T-cell (primary cell): ENCODE measurements at regions of chr7 and their contacts with region 1.

Region 1: DNA sequence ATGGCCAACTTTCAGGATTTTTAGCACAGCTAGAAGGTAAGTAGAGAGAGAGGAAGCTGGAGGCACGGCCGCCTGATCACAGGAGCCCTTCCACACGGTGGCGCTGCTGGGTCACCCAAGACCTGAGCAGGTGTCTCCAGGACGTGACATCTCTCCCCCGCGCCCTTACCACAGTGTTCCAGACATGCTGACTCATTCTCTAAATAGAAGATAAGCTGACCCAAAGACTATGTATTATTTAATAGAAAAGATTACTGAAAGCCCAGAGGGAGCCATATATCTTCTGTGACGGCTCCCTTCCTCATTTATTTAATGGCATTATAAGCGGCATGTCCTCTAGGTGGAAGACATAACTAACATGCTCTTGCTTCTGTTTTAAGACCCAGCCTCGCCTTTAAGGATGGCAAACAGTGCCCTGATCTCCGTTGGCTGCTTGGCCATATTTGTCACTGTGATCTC is 26.0 kb upstream of the MALSU1 start:
- DNase-seq: peak; percentile 67 to 92 (median 84)
- ATAC-seq: peak; percentile 98 to 99 (median 98)
- H3K4me3 ChIP-seq: no peak overlapping the region
- H3K4me3 Mint-ChIP-seq: peak overlapping the region; percentile 46 to 50 (median 47)
- H3K27ac ChIP-seq: no peak overlapping the region
- H3K27ac Mint-ChIP-seq: no peak overlapping the region
- H3K4me1 ChIP-seq: peaks cover 0 to 7% of the 10 kb centered on the region in 2 experiments
- H3K4me1 Mint-ChIP-seq: peaks cover 7 to 15% (median 13%) of the 10 kb centered on the region in 3 donors
- H3K27me3 ChIP-seq: peaks cover 0 to 8% of the 10 kb centered on the region in 2 experiments
- H3K27me3 Mint-ChIP-seq: peaks cover 4 to 13% of the 10 kb centered on the region in 2 donors

Region 2: DNA sequence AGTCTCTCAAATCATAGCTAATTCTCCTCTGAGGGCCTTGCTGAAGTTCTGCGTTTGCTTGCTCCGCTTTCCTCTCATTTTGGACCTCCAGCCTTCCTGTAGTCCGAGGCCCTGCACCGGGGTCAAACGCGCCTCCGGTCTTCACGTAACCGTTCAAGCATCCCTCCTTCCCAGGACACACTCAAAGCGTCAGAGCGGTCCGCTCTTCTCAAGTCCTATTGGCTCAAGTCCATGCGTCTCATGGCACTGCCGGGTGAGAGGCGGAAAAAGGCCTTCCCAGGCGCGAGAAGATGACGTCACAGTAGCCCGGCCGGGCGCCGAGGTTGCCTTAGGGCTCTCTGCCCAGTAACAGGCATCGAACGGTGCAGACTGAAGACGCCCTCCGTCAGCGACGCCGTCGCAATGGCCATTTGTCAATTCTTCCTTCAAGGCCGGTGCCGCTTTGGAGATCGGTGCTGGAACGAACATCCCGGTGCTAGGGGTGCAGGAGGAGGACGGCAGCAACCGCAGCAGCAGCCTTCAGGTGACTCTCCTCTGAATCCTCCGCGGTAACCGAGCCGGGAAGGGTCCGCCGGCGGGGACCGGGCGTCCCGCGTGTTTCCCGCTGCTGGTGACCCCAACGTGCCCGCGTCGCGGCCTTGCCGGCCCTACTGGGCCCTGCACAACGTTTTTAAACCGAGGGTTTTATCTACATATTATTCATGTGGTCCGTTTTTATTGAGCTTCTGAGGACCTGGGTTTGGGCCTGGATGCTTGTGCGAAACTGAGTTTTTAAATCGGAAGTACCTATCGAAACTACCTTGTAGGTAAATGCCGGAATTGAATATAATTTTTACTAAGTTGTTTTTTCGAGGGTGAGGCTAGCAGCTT is 91.3 kb before region 1 on chr7 and contains the start of gene NUP42:
- CTCF ChIA-PET with region 1: interaction called in 1 of 2 experiments, 11 read pairs
- POLR2A ChIA-PET with region 1: no interaction called
- DNase-seq: peak; percentile 87 to 97 (median 92)
- ATAC-seq: peak; percentile 94 to 97 (median 96)
- H3K4me3 ChIP-seq: peak within 1 kb of the TSS; percentile 72 to 74
- H3K4me3 Mint-ChIP-seq: peak within 1 kb of the TSS; percentile 93 to 98 (median 95)
- H3K27ac ChIP-seq: peak within 1 kb of the TSS; percentile 83
- H3K27ac Mint-ChIP-seq: peak within 1 kb of the TSS; percentile 97
- H3K4me1 ChIP-seq: peaks cover 14 to 20% of the 10 kb centered on the region in 2 experiments
- H3K4me1 Mint-ChIP-seq: peaks cover 37 to 50% (median 40%) of the 10 kb centered on the region in 3 donors
- H3K27me3 ChIP-seq: no peaks in the 10 kb centered on the region
- H3K27me3 Mint-ChIP-seq: no peaks in the 10 kb centered on the region
- total RNA-seq, gene NUP42: 17.5 to 38.9 (median 31.9) TPM

Region 3: GRCh38 chr7:23216021-23216420 is 57.1 kb before region 1 on chr7:
- CTCF ChIA-PET with region 1: no interaction called
- POLR2A ChIA-PET with region 1: no interaction called
- DNase-seq: no peak
- ATAC-seq: no peak
- H3K4me3 ChIP-seq: no peak overlapping the region
- H3K4me3 Mint-ChIP-seq: no peak overlapping the region
- H3K27ac ChIP-seq: no peak overlapping the region
- H3K27ac Mint-ChIP-seq: no peak overlapping the region
- H3K4me1 ChIP-seq: no peaks in the 10 kb centered on the region
- H3K4me1 Mint-ChIP-seq: no peaks in the 10 kb centered on the region
- H3K27me3 ChIP-seq: peaks cover 0 to 17% of the 10 kb centered on the region in 2 experiments
- H3K27me3 Mint-ChIP-seq: peaks cover 12 to 15% of the 10 kb centered on the region in 2 donors

Region 4: DNA sequence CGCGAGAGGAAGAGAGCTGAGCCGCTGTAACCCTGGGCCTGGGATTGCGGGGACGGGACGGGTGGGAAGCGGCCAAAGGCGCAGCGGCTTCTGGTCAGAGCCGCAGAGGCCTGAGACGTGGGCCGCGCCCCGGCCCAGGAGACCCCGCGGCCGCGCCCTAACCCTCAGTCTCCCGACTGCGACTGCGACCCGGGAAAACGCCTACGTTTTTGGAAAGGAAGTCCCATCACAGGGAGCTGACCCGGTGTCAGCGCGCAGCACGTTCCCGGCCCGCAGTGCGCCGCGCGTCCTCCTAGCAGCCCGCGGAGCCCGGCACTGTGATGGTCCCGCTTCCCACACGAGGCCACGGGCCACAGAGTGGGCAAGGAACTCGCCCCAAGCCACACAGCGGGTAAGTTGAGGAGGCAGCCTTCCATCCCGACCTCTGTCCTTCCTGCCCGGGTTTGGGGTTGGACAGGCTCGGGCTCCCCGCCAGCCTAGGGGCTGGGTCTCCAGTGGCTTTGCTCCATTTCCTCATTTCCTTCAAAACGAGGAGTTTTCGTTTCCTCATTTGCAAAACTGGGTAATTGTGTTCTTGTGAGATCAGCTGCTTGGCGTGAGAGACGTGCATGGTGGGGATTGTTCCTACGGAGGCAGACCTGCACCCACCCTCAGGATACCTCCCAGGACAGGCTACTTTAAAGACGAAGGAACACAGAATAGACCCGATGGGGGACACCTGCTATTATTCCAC is 25.4 kb before region 1 on chr7:
- CTCF ChIA-PET with region 1: no interaction called
- POLR2A ChIA-PET with region 1: no interaction called
- DNase-seq: peak in 1 of 35 experiments; percentile 11
- ATAC-seq: no peak
- H3K4me3 ChIP-seq: peak overlapping the region in 1 of 2 donors; percentile 29
- H3K4me3 Mint-ChIP-seq: no peak overlapping the region
- H3K27ac ChIP-seq: no peak overlapping the region
- H3K27ac Mint-ChIP-seq: no peak overlapping the region
- H3K4me1 ChIP-seq: peaks cover 0 to 8% of the 10 kb centered on the region in 2 experiments
- H3K4me1 Mint-ChIP-seq: peaks cover 0 to 3% (median 2%) of the 10 kb centered on the region in 3 donors
- H3K27me3 ChIP-seq: peaks cover 7 to 35% of the 10 kb centered on the region in 2 experiments
- H3K27me3 Mint-ChIP-seq: peaks cover 58 to 81% of the 10 kb centered on the region in 2 donors

Region 5: DNA sequence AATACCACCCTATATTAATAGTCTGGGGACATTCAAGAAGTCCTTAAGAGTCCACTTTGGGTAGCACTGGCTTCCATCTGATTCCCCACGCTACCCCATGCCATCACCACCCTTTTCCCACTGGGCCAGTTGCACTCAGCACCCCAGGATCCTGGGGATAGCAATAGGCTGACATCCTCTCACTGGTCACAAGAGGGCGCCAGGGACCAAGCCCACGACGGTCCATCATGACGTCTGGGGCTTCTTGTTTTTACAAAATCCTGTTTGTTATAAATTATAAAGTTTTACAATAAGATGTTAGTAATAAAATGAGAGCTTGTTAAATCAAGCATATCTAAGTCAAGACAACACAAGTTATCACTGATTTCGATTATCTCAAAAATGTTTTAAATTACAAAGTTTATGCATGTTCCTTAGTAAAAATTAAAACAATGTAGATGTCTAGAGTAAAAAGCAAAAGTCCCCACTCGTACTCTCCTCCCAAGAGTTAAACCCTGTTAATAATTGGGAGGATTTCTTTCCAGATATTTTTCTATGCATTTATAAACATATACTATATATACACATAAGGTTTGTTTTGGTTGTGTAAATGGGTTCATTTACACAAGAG is 11.2 kb before region 1 on chr7:
- CTCF ChIA-PET with region 1: interaction called, 21 to 41 read pairs
- POLR2A ChIA-PET with region 1: no interaction called
- DNase-seq: peak in 34 of 35 experiments; percentile 16 to 74 (median 42)
- ATAC-seq: peak; percentile 75 to 86 (median 84)
- H3K4me3 ChIP-seq: no peak overlapping the region
- H3K4me3 Mint-ChIP-seq: no peak overlapping the region
- H3K27ac ChIP-seq: no peak overlapping the region
- H3K27ac Mint-ChIP-seq: no peak overlapping the region
- H3K4me1 ChIP-seq: no peaks in the 10 kb centered on the region
- H3K4me1 Mint-ChIP-seq: no peaks in the 10 kb centered on the region
- H3K27me3 ChIP-seq: peaks cover 0 to 10% of the 10 kb centered on the region in 2 experiments
- H3K27me3 Mint-ChIP-seq: peaks cover 16% of the 10 kb centered on the region in 2 donors

Region 6: GRCh38 chr7:23284871-23285270 is 11.7 kb after region 1 on chr7:
- CTCF ChIA-PET with region 1: interaction called, 5 to 12 read pairs
- POLR2A ChIA-PET with region 1: no interaction called
- DNase-seq: no peak
- ATAC-seq: no peak
- H3K4me3 ChIP-seq: no peak overlapping the region
- H3K4me3 Mint-ChIP-seq: no peak overlapping the region
- H3K27ac ChIP-seq: no peak overlapping the region
- H3K27ac Mint-ChIP-seq: no peak overlapping the region
- H3K4me1 ChIP-seq: peaks cover 0 to 10% of the 10 kb centered on the region in 2 experiments
- H3K4me1 Mint-ChIP-seq: peaks cover 10 to 12% (median 11%) of the 10 kb centered on the region in 3 donors
- H3K27me3 ChIP-seq: no peaks in the 10 kb centered on the region
- H3K27me3 Mint-ChIP-seq: no peaks in the 10 kb centered on the region

Region 7: DNA sequence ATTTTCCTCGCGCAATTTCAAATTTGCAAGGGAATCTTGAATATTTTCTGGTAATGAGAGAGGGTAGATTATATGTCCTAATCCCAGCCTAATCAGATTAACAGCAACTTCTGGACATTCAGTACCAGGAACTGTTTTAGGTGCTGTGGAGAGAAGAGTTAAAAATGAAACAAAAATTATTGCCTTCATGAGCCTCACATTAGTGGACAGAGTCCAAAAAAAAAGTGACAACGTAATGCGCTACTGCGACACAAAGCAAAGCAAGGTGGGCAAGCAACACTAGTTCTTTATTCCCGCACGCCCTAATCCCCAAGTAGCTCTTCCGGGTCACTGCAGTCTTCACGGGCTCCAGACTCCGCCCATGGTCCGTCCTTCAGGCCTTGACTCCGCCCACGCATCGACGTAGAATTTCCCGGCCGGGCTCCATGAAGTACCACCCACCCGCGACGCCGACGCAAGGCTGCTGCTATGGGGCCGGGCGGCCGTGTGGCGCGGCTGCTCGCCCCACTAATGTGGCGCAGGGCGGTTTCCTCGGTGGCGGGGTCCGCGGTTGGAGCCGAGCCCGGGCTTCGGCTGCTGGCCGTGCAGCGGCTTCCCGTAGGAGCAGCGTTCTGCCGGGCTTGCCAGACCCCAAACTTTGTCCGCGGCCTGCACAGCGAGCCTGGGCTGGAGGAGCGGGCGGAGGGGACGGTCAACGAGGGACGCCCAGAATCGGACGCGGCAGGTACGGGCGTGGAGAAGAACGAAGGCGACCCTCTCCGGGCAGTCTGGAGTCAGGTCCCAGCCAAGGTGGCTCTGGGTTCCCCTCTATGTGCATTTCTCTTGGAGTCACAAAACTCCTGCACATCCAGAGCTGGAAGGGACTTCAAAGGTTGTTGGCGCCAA is 26.0 kb after region 1 on chr7 and contains the start of gene MALSU1:
- CTCF ChIA-PET with region 1: interaction called, 8 to 14 read pairs
- POLR2A ChIA-PET with region 1: no interaction called
- DNase-seq: peak; percentile 89 to 99 (median 95)
- ATAC-seq: peak; percentile 99 to 100 (median 100)
- H3K4me3 ChIP-seq: peak within 1 kb of the TSS; percentile 87 to 95
- H3K4me3 Mint-ChIP-seq: peak within 1 kb of the TSS; percentile 89 to 95 (median 89)
- H3K27ac ChIP-seq: peak within 1 kb of the TSS; percentile 86
- H3K27ac Mint-ChIP-seq: peak within 1 kb of the TSS; percentile 93 to 99
- H3K4me1 ChIP-seq: peaks cover 20 to 38% of the 10 kb centered on the region in 2 experiments
- H3K4me1 Mint-ChIP-seq: peaks cover 44 to 56% (median 45%) of the 10 kb centered on the region in 3 donors
- H3K27me3 ChIP-seq: no peaks in the 10 kb centered on the region
- H3K27me3 Mint-ChIP-seq: no peaks in the 10 kb centered on the region
- total RNA-seq, gene MALSU1: 29.0 to 39.6 (median 37.9) TPM

Region 8: GRCh38 chr7:23462846-23463245 is 189.7 kb after region 1 on chr7:
- CTCF ChIA-PET with region 1: interaction called in 1 of 2 experiments, 20 read pairs
- POLR2A ChIA-PET with region 1: no interaction called
- DNase-seq: peak in 2 of 35 experiments; percentile 4 to 35
- ATAC-seq: peak in 1 of 4 experiments; percentile 29
- H3K4me3 ChIP-seq: no peak overlapping the region
- H3K4me3 Mint-ChIP-seq: no peak overlapping the region
- H3K27ac ChIP-seq: no peak overlapping the region
- H3K27ac Mint-ChIP-seq: no peak overlapping the region
- H3K4me1 ChIP-seq: peaks cover 3 to 45% of the 10 kb centered on the region in 2 experiments
- H3K4me1 Mint-ChIP-seq: peaks cover 7 to 10% (median 7%) of the 10 kb centered on the region in 3 donors
- H3K27me3 ChIP-seq: peaks cover 0 to 37% of the 10 kb centered on the region in 2 experiments
- H3K27me3 Mint-ChIP-seq: peaks cover 66 to 70% of the 10 kb centered on the region in 2 donors